Activated naive CD4-positive, alpha-beta T cell treated with anti-CD3 and anti-CD28 coated beads for 36 hours (primary cell): ENCODE measurements at regions of chr14 and their contacts with region 1.

Region 1: DNA sequence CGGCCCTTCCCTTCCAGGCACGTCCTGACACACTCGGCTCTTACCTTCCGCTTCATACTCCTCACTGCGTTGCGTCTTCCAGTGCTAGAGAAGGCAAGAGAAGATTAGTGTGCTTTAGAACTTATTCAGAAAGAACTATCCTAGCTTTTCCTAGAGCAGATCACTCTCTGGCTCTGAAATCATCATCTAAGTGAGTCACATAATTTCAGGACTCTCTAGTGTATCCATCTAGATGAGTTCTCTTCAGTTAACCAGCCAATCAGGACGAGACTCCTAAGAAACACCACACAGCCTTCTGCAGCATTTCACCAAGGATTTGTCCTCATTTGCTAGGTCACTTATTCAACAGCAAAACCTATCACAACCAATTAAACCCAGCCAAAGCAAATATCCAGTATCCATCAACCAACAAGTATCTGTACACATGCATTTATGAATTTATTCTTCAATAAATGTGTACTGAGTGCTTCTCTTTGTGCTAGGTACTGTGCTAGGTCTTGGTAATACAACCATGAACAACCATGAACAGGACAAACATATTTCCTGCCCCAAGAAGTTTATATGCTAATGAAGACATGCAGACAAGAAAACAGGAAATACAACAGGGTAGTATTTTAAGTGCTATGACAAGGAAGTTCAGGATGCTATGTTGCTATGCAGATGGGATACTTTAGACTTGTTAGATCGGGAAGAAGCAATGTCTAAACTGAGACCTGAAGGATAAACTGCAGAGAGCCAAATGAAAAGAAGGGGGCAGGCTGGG is 52.1 kb downstream of the NIN start:
- DNase-seq: no peak
- H3K4me3 Mint-ChIP-seq: no peak overlapping the region
- H3K27ac Mint-ChIP-seq: no peak overlapping the region
- H3K4me1 Mint-ChIP-seq: peaks cover 32% of the 10 kb centered on the region
- H3K27me3 Mint-ChIP-seq: no peaks in the 10 kb centered on the region

Region 2: GRCh38 chr14:50542941-50543418 is 235.9 kb before region 1 on chr14:
- CTCF ChIA-PET with region 1: interaction called, 25 read pairs
- intact Hi-C with region 1: loop called (anchors 1 kb)
- DNase-seq: peak; percentile 54
- H3K4me3 Mint-ChIP-seq: no peak overlapping the region
- H3K27ac Mint-ChIP-seq: no peak overlapping the region
- H3K4me1 Mint-ChIP-seq: peaks cover 8% of the 10 kb centered on the region
- H3K27me3 Mint-ChIP-seq: no peaks in the 10 kb centered on the region

Region 3: GRCh38 chr14:50599700-50600444 is 179.0 kb before region 1 on chr14:
- CTCF ChIA-PET with region 1: interaction called, 14 read pairs
- intact Hi-C with region 1: loop called (anchors 1 kb)
- DNase-seq: no peak
- H3K4me3 Mint-ChIP-seq: no peak overlapping the region
- H3K27ac Mint-ChIP-seq: no peak overlapping the region
- H3K4me1 Mint-ChIP-seq: no peaks in the 10 kb centered on the region
- H3K27me3 Mint-ChIP-seq: no peaks in the 10 kb centered on the region

Region 4: GRCh38 chr14:50619556-50620141 is 159.3 kb before region 1 on chr14:
- CTCF ChIA-PET with region 1: interaction called, 27 read pairs
- intact Hi-C with region 1: loop called (anchors 1 kb)
- DNase-seq: no peak
- H3K4me3 Mint-ChIP-seq: no peak overlapping the region
- H3K27ac Mint-ChIP-seq: no peak overlapping the region
- H3K4me1 Mint-ChIP-seq: no peaks in the 10 kb centered on the region
- H3K27me3 Mint-ChIP-seq: no peaks in the 10 kb centered on the region

Region 5: DNA sequence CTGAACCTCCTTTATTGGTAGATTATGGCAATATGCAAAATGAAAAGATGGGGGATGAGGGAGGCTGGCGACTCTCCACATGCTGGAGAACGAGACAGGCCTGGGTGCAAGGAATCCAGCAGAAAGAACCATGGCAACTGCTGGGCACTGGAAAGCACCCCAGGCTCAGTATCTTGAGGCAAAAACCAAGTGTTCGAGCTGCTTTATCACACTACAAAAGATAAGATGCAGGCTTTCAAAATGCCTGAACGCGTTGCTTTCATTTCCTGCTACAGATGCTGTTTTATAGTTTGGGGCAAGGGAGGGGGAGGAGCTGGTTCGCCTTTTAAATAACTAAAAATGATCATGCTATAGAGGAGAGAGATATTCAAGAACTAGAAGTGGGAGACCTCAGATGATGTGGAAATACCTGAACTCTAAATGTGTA is 13.2 kb after region 1 on chr14:
- CTCF ChIA-PET with region 1: interaction called, 30 read pairs
- intact Hi-C with region 1: no loop called
- DNase-seq: peak; percentile 47
- H3K4me3 Mint-ChIP-seq: peak overlapping the region; percentile 68
- H3K27ac Mint-ChIP-seq: peak overlapping the region; percentile 79
- H3K4me1 Mint-ChIP-seq: peaks cover 77% of the 10 kb centered on the region
- H3K27me3 Mint-ChIP-seq: no peaks in the 10 kb centered on the region